ENCODE measurements at regions of chr7 and their contacts with region 1.

Region 1: DNA sequence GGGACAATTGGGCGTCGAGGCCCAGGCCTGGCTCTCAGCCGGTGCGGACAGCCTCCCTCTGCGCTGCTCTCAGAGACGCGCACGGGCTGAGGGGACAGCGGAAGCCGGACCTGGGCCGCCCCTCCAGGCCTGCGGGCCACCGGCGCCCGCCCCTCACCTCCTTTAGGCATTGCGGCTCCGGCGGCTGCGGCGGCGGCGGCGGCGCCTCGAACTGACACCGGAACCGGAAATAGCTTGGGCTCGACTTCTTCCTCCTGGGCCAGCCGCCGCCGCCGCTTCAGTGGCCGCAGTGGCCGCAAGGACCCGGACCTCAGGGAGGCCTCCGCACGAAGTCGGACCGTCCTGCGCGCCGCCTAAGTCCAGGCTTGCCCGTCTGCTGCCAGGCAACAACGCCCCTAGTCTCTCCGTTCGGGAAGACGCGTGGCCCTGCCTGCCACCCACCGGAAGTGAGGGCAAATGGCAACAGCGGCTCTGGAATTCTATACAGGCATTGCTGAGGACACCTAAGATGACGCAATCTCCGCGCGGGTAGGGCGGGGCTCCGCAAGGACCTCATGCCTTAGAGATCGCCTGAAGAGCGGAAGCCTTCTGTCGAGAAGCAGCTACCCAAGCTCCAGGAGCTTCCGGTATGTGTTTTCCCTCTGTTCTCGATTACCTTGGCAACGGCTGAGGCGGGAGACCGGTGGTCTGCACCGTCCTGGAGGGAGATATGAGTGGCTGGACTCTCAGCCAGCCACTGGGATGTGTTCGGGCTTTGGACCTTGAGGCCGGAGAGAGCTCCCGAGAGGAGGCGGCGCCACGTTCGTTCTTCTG is at the starts of genes BUD31 and PDAP1:
- DNase-seq: peak; percentile 93
- H3K4me3 ChIP-seq: peak within 1 kb of the TSS; percentile 85 to 87
- H3K27ac ChIP-seq: peak within 1 kb of the TSS; percentile 93 to 98
- H3K4me1 ChIP-seq: peaks cover 11% of the 10 kb centered on the region
- H3K27me3 ChIP-seq: no peaks in the 10 kb centered on the region
- CTCF ChIP-seq: peak in 2 of 4 experiments; percentile 60 to 61
- POLR2A ChIP-seq: peak; percentile 81
- total RNA-seq, gene BUD31: 73.8 to 78.3 TPM
- total RNA-seq, gene PDAP1: 98.6 to 103 TPM

Region 2: DNA sequence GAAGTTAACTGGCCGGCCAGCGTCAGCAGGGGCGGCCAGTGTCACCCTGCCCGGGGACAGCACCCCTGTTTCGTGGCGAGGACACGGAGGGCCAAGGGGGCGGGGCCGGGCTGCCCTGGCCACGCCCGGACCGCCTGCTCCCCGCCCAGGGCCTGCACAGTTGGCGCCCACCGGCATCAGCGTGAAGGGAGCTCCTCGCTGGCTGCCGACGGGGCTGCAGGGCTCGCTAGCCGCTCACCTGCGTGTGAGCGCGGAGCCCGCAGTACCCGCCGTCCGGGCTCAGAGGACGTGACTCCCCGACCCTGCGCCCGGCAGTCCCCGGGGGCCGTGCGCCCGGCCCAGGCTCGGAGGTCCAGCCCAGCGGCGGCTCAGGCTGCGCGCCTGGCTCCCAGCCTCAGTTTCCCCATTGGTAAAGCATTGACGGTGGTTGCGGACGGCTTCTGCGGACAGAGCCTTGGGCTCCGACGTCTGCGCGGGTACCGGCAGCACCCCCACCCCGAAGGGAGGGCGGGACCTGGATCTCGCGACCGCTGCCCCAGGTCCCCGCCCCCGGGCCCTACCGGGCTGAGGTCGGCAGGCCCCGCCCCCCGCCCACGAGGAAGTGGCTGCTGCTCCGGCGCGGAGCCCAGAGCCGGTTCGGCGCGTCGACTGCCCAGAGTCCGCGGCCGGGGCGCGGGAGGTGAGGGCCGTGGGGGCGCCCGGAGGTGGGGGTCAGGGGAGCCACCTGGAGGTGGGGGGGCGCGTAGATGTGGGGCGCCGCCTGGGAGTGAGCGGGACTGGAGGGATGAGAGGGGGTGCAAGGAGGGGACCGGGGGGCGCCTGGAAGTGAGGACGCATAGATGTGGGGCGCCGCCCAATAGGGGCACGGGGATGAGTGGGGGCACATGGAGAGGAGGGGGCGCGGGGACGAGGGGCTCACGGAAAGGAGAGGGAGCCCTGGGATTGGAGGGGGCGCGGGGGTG is 34.2 kb before region 1 on chr7 and contains the start of gene ARPC1B:
- intact Hi-C with region 1: loop called (anchors 5 kb)
- DNase-seq: peak; percentile 49
- H3K4me3 ChIP-seq: peak within 1 kb of the TSS; percentile 76 to 78
- H3K27ac ChIP-seq: peak within 1 kb of the TSS; percentile 73 to 77
- H3K4me1 ChIP-seq: no peaks in the 10 kb centered on the region
- H3K27me3 ChIP-seq: no peaks in the 10 kb centered on the region
- CTCF ChIP-seq: no peak
- POLR2A ChIP-seq: peak; percentile 61
- total RNA-seq, gene ARPC1B: 85.4 to 86.5 TPM

Region 3: GRCh38 chr7:99897322-99898022 is 488.9 kb after region 1 on chr7:
- intact Hi-C with region 1: no loop called
- DNase-seq: no peak
- H3K4me3 ChIP-seq: no peak overlapping the region
- H3K27ac ChIP-seq: no peak overlapping the region
- H3K4me1 ChIP-seq: no peaks in the 10 kb centered on the region
- H3K27me3 ChIP-seq: no peaks in the 10 kb centered on the region
- CTCF ChIP-seq: no peak
- POLR2A ChIP-seq: no peak